Activated naive CD4-positive, alpha-beta T cell treated with anti-CD3 and anti-CD28 coated beads, Interleukin-2, amount 10 ng/mL, durations not matched to agents 7 days and 5 days (primary cell): ENCODE measurements at regions of chrX and their contacts with region 1.

Region 1: DNA sequence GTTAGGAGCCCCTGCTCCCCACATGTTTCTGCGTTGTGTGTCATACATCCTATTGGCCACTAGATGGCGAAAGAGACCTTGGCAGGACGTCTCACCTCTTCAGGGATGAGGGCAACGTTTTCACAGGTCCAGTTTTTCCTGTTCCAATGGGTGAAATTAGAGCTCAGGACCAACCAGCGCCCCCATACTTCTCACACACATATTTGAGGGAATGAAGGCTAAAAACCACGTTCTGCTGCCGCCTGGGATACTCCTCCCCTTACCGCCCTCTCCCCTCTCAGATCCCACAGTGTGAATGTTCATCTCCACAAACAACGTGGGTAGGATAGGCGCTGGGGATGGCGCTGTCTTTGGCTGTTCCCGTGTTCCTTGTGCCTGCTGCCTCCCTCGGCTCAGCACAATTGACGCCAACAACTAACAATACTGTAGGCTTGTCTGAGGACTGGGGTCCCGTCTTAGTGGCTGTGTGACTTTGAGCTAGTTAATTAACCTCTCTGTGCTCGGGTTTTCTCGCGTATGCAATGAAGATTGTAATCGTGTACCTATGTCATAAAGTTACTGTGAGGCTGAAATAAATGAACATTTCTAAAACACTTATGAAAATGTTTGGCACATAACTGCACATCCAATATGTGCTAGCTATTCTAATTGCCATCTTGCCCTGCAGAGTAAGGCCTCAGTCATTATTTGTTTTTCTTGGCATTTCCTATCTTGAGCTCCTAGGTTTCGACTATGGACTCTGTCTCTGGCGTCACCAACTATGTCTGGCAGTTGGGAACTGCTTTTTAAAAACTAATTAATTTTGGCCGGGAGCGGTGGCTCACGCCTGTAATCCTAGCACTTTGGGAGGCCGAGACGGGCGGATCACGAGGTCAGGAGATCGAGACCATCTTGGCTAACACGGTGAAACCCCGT is 181.3 kb upstream of the STK26 start:
- DNase-seq: peak; percentile 47
- H3K4me3 Mint-ChIP-seq: no peak overlapping the region
- H3K27ac Mint-ChIP-seq: no peak overlapping the region
- H3K4me1 Mint-ChIP-seq: peaks cover 6% of the 10 kb centered on the region
- H3K27me3 Mint-ChIP-seq: peaks cover 3% of the 10 kb centered on the region

Region 2: DNA sequence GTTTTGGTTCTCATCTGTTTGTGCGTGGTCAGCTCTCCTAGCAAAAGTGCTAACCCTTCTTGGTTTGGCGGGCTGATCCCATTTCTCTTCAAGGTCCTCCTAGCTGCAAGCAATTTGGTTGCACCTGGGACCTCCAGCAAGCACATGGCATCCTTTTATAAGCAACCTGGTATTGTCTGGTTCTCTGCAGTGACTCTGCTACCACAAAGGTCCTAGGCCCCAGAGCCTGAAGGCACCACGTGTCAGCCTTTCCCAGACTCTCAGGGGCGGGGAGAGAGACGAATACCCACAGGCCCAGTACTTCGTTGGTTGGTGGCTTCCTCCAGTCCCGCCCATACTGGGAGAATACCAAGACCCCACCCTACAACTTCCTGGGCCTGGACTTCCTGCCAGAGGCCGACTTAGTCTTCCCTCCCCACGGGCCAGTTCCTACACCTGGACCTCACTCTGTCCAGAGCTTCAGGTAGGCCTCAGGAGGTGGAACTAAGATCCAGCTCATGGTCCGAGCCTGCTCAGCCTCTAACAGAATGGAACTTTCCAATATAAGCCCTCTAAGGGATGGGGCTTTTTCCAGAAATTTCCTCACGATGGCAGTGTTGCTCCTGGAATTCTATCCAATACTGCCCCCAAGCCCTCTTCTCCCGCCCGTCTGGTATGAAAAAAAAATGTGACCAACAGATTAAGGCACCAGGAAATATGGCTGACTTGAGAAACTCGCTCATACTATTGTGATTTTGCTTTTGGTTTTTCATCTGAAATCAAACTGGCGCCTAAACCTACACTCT is 11.2 kb before region 1 on chrX:
- CTCF ChIA-PET with region 1: interaction called, 11 read pairs
- DNase-seq: peak; percentile 79
- H3K4me3 Mint-ChIP-seq: peak overlapping the region; percentile 80
- H3K27ac Mint-ChIP-seq: peak overlapping the region; percentile 93
- H3K4me1 Mint-ChIP-seq: peaks cover 46% of the 10 kb centered on the region
- H3K27me3 Mint-ChIP-seq: no peaks in the 10 kb centered on the region

Region 3: DNA sequence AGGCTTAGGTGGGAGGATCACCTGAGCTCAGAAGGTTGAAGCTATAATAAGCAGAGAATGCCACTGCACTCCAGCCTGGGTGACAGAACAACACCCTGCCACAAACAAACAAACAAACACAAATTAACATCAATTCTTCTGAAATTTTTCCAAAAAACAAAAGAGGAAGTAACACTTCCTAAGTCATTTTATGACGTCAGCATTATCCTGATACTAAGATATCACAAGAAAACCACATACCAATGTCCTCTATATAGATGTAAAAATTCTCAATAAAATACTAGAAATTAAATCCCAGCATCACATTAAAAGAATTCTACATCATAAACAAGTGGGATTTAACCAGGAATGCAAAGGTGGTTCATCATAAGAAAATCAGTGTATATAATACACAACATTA is 117.0 kb after region 1 on chrX:
- CTCF ChIA-PET with region 1: no interaction called
- DNase-seq: no peak
- H3K4me3 Mint-ChIP-seq: no peak overlapping the region
- H3K27ac Mint-ChIP-seq: no peak overlapping the region
- H3K4me1 Mint-ChIP-seq: peaks cover 10% of the 10 kb centered on the region
- H3K27me3 Mint-ChIP-seq: no peaks in the 10 kb centered on the region

Region 4: DNA sequence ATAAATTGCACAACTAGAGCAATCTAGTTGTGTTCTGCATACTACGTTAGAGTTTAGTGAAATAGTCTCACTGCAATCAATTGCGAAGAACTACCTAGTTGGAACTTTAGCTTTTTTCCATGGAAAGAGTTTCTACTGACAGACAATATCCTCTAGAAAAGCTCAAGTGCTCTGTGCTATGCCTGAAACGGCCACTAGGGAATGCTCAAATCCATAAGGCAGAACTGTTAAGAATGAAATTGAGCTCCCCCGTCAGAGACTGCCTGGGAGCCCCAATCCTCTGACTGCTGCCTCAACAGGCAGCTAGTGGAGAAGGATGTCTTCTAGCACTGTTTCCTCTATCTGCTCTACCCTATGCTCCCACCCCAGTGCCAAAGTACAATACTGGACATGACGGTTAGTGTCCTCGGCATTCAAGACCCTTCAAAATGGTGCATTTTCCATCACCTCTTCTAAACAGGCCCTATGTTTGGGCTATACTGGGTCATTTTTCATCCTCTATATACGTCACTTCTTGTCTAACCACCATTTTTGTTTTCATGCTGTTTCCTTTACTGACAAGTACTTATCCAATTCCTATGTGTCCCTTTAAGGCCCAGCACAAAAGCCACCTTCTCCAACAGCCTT is 250.8 kb after region 1 on chrX:
- CTCF ChIA-PET with region 1: interaction called, 11 read pairs
- DNase-seq: peak; percentile 64
- H3K4me3 Mint-ChIP-seq: no peak overlapping the region
- H3K27ac Mint-ChIP-seq: no peak overlapping the region
- H3K4me1 Mint-ChIP-seq: peaks cover 10% of the 10 kb centered on the region
- H3K27me3 Mint-ChIP-seq: peaks cover 4% of the 10 kb centered on the region

Region 5: GRCh38 chrX:132219343-132219768 is 377.6 kb after region 1 on chrX and contains the start of gene RAP2C:
- CTCF ChIA-PET with region 1: interaction called, 17 read pairs
- DNase-seq: peak; percentile 70
- H3K4me3 Mint-ChIP-seq: peak within 1 kb of the TSS; percentile 76
- H3K27ac Mint-ChIP-seq: peak within 1 kb of the TSS; percentile 92
- H3K4me1 Mint-ChIP-seq: peaks cover 24% of the 10 kb centered on the region
- H3K27me3 Mint-ChIP-seq: no peaks in the 10 kb centered on the region